ENCODE measurements at regions of chr11 and their contacts with region 1.

Region 1: DNA sequence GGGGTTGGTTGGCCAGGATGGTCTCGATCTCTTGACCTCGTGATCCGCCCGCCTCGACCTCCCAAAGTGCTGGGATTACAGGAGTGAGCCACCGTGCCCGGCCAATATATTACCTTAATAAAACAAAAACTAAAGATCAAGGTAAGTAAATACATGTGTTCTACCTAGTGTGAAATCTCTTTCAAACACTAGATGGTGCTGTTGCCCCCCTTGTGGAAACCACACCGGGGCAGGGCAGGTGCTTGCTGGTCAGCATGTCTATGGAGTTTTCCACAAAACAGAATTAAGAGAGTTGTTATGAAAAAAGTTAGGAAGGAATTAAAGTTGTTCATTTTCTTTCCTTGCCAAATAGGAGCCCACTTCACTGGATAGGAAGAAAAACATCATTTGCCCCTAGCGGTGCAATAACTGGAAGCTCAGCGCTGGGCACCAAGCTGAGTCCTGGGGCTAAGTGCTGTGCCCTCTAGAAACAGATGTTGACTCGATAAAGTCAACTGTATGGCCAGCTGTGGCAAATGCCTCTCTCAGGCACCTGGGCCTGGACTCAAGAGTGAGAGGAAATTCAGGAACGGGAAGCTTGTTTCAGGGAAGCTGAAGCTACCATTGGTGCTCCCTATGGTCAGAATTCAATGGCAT is 6.3 kb upstream of the KCNJ5 start:
- DNase-seq: peak; percentile 52
- H3K4me3 Mint-ChIP-seq: no peak overlapping the region
- H3K27ac Mint-ChIP-seq: no peak overlapping the region
- H3K4me1 Mint-ChIP-seq: no peaks in the 10 kb centered on the region
- H3K27me3 Mint-ChIP-seq: peaks cover 43% of the 10 kb centered on the region

Region 2: GRCh38 chr11:128814856-128815705 is 69.7 kb before region 1 on chr11:
- intact Hi-C with region 1: no loop called
- DNase-seq: no peak
- H3K4me3 Mint-ChIP-seq: no peak overlapping the region
- H3K27ac Mint-ChIP-seq: no peak overlapping the region
- H3K4me1 Mint-ChIP-seq: peaks cover 13% of the 10 kb centered on the region
- H3K27me3 Mint-ChIP-seq: no peaks in the 10 kb centered on the region

Region 3: DNA sequence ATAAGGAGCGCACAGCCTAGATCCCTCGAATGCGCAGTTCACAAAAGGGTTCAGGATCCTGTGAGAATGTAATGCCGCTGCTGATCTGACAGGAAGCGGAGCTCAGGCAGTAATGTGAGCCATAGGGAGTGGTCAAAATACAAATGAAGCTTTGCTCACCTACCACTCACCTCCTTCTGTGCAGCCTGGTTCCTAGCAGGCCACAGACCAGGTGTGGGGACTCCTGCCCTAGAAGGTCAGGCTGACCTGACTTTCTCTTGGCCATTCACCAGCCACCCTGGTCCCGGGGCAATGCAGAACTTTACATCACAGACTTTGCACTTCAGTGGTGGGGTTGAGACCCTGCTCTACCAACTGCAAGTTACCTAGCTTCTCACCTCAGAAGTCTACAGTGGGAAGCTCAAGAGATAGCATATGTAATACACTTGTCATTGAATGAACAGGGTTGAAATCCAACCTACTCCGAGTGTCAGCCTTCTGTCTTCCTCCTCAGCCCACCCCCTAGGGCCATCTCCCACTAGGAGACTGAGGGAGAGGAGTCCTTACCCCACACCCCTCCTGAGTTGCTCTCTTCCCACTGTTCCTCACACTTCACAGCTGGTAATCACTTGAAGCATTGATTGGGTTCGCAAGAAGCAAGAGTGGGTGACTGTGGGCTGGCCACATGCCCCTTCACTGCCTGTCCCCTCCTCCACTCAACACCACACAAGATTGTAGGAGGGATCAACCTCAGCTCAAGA is 15.8 kb before region 1 on chr11:
- intact Hi-C with region 1: loop called (anchors 2 kb)
- DNase-seq: no peak
- H3K4me3 Mint-ChIP-seq: no peak overlapping the region
- H3K27ac Mint-ChIP-seq: no peak overlapping the region
- H3K4me1 Mint-ChIP-seq: no peaks in the 10 kb centered on the region
- H3K27me3 Mint-ChIP-seq: peaks cover 13% of the 10 kb centered on the region

Region 4: DNA sequence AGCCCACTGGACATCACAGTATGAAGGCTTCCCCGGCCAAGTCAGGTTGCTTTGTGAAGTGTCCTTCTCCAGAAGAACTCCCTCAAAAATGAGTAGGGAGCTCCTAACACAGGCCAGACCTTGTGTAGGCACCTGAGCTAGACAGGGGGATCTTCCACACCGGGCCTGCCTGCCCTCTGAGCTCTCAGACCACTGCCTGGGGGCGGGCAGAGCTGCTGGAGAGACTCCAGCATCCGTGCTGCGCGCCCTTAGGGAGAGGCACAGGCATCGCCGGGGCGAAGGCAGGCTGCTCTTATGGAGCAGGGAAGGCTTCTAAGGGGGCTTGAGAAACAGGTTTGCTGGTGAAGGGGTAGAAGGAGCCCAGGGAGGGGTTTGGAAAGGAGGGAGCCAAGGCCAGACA is 10.7 kb after region 1 on chr11:
- intact Hi-C with region 1: no loop called
- DNase-seq: no peak
- H3K4me3 Mint-ChIP-seq: no peak overlapping the region
- H3K27ac Mint-ChIP-seq: no peak overlapping the region
- H3K4me1 Mint-ChIP-seq: peaks cover 6% of the 10 kb centered on the region
- H3K27me3 Mint-ChIP-seq: peaks cover 55% of the 10 kb centered on the region

Region 5: DNA sequence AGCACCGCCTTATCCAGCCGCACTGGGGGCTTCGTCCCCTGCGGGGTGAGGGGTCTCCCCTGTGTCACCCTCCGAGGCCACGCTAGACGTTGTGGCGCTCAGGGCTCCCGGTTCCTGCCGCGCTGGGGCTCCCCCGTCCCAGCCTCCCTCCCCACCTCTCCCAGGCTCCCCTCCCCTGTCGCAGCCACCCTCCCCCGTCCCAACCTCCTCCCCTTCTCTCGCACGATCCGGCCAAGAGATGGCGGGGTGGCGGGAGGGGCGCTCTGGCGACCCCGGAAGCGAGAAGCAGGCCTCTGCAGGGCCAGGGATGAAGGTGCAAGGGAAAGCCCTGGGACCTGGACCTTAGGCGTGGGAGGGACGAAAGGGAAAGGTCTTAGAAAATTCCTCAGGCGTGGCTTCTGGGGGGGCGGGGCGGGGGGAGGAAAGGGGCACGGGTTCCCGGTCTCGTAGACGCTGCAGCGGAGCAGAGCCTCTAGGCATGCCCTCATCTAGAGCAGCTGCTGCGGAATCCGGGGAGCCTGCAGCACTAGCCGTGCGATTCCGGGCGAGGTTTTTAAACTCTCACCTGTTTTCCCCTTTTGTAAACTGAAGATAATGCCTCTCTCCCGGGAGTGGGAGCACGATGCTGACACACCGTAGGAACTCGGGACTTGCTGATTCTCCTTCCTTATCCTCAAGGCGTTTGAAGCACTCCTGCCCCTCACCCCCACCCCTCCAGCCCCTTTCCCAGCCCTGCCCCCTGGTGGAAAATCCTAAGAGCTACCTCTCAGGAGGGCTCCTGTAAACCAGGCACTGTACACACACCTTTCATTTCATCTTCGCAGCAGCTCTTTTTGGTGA is 20.7 kb after region 1 on chr11:
- intact Hi-C with region 1: loop called (anchors 1 kb)
- DNase-seq: no peak
- H3K4me3 Mint-ChIP-seq: peak overlapping the region; percentile 65
- H3K27ac Mint-ChIP-seq: no peak overlapping the region
- H3K4me1 Mint-ChIP-seq: peaks cover 14% of the 10 kb centered on the region
- H3K27me3 Mint-ChIP-seq: peaks cover 60% of the 10 kb centered on the region

Region 6: GRCh38 chr11:128956401-128957201 is 71.8 kb after region 1 on chr11:
- intact Hi-C with region 1: loop called (anchors 1 kb)
- DNase-seq: no peak
- H3K4me3 Mint-ChIP-seq: no peak overlapping the region
- H3K27ac Mint-ChIP-seq: no peak overlapping the region
- H3K4me1 Mint-ChIP-seq: peaks cover 12% of the 10 kb centered on the region
- H3K27me3 Mint-ChIP-seq: peaks cover 26% of the 10 kb centered on the region

Region 7: GRCh38 chr11:129117595-129118350 is 233.0 kb after region 1 on chr11:
- intact Hi-C with region 1: loop called (anchors 1 kb)
- DNase-seq: no peak
- H3K4me3 Mint-ChIP-seq: no peak overlapping the region
- H3K27ac Mint-ChIP-seq: no peak overlapping the region
- H3K4me1 Mint-ChIP-seq: no peaks in the 10 kb centered on the region
- H3K27me3 Mint-ChIP-seq: peaks cover 2% of the 10 kb centered on the region

Region 8: GRCh38 chr11:129331871-129332274 is 447.1 kb after region 1 on chr11:
- intact Hi-C with region 1: loop called (anchors 1 kb)
- DNase-seq: peak; percentile 34
- H3K4me3 Mint-ChIP-seq: no peak overlapping the region
- H3K27ac Mint-ChIP-seq: no peak overlapping the region
- H3K4me1 Mint-ChIP-seq: no peaks in the 10 kb centered on the region
- H3K27me3 Mint-ChIP-seq: no peaks in the 10 kb centered on the region

Region 9: GRCh38 chr11:129750349-129751292 is 865.8 kb after region 1 on chr11:
- intact Hi-C with region 1: loop called (anchors 1 kb)
- DNase-seq: peak; percentile 71
- H3K4me3 Mint-ChIP-seq: no peak overlapping the region
- H3K27ac Mint-ChIP-seq: no peak overlapping the region
- H3K4me1 Mint-ChIP-seq: no peaks in the 10 kb centered on the region
- H3K27me3 Mint-ChIP-seq: peaks cover 4% of the 10 kb centered on the region